ENCODE measurements at regions of chr13 and their contacts with region 1.

Region 1: DNA sequence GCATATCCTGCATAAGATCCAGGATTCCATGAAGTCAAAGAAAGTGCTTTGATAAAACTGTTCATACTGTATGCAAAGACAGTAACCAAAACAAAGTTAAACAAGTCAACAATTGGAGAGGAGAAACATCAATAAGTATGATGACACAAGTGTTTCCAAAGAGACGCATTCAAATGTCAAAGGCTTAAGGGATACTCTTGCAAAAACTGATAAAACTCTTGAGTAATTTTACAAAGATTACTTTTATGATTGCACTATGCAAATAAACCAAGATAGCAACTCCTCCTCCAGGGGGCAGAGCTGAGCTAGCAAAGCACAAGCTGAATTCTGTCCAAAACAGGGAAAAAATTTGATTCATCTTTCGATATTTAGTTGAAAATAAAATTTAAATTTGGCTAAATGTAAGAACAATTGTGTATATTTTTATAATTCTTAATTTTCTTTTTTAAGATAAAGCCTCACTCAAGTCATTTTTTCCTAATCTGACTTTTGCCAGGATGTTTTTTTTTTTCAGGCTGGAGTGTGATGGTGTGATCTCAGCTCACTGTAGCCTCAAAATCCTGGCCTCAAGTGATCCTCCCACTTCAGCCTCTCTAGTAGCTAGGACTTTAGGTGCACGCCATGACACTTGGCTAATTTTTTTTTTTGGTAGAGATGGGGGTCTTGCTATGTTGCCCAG is 84.0 kb downstream of the MZT1 start:
- H3K4me3 Mint-ChIP-seq: no peak overlapping the region
- H3K27ac Mint-ChIP-seq: no peak overlapping the region
- H3K4me1 Mint-ChIP-seq: peaks cover 5% of the 10 kb centered on the region
- H3K27me3 Mint-ChIP-seq: no peaks in the 10 kb centered on the region

Region 2: GRCh38 chr13:72696579-72696978 is 53.1 kb after region 1 on chr13:
- intact Hi-C with region 1: loop called (anchors 10 kb)
- H3K4me3 Mint-ChIP-seq: no peak overlapping the region
- H3K27ac Mint-ChIP-seq: no peak overlapping the region
- H3K4me1 Mint-ChIP-seq: no peaks in the 10 kb centered on the region
- H3K27me3 Mint-ChIP-seq: no peaks in the 10 kb centered on the region

Region 3: GRCh38 chr13:73708393-73708985 is 1065.0 kb after region 1 on chr13:
- intact Hi-C with region 1: loop called (anchors 2 kb)
- H3K4me3 Mint-ChIP-seq: no peak overlapping the region
- H3K27ac Mint-ChIP-seq: no peak overlapping the region
- H3K4me1 Mint-ChIP-seq: no peaks in the 10 kb centered on the region
- H3K27me3 Mint-ChIP-seq: no peaks in the 10 kb centered on the region